ENCODE measurements at regions of chrX and their contacts with region 1.

Region 1: GRCh38 chrX:11081511-11081910 is 29.6 kb upstream of the HCCS start:
- DNase-seq: no peak

Region 2: DNA sequence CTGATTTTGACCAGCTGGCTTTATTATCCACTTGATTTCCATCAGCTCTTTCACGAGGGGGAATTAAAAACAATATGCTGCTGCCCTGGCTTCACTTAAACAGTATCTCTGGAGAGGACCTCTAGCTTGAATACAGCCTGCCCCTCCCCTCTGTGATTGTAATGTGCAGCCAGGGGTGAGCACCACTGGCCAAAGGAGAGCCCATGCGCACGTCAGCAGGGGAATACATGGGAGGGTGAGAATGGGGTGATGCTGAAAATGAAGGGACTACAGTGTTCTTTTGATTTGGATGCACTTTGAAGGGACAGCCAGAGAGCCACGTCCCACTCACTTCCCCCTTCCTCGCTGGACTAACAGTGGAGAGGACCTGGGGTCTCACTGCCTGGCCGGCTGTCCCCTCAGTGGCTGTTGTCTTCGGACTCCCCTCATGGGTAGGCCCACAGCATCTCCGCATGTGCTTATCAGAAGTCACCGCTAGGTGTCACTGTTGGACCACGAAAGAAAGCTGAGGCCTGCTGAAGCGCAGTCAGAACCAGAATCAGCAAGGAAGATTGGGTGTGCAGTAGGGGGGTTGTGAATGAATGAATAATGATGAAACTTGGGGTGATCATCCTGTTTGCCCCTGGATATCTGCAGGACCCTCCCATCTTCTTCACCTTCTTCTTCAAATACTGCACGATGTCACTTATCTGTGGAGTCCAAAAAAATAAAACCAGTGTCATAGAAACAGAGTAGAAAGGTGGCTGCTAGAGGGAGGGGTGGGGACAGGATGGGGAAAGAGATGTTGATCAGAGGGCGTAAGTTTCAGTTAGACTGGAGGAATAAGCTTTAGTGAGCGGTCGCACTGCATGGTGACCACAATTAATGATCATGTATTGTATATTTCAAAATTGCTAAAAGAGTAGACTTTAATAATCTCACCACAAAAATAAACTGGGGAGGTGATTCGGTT is 891.9 kb before region 1 on chrX:
- in situ Hi-C with region 1: loop called (anchors 25 kb)
- DNase-seq: peak; percentile 62

Region 3: DNA sequence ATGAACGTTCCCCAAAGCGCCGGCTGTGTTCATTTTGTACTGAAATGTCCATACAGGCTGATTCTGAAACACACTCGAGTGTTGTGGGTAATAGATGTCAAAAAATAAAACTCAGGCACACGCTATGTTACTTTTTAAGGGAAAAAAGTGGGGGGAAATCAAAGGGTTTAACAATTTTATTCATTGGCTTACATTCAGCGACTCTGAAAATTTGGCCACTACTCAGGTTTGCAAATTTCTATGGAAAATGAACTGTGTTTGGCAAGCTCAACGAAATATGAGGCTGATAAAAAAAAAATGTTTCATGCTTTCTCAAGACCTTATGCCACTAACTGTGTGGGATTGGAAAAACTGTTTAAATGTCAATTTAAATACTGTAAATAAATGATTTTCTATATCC is 230.2 kb after region 1 on chrX:
- in situ Hi-C with region 1: no loop called
- DNase-seq: no peak

Region 4: GRCh38 chrX:11970578-11971359 is 889.3 kb after region 1 on chrX:
- in situ Hi-C with region 1: no loop called
- DNase-seq: no peak

Measured in Caki2 (cell line).